ENCODE measurements at regions of chr4 and their contacts with region 1.

Region 1: DNA sequence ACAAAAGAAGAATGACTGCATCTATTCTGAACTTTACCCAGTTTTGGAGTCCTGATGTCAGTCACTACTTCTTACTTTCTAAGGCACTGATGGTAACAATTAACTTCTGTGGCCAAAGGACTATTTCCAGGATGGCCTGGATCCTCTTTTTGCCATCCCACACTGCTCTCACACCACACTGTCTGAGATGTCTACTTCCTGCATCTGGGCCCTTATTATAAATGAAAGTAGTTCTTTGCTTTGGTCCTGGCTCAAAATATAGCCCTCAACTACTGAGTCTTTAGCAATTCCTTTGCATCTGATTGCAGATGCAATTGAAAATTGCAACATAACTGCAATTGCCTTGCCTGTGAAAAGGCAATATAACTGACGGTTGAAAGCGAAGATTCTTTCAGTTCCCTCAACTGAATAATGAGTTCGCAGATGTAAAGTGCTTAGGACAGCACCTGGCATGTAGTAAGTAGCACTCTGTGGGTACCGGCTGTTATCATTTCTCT is 44.2 kb downstream of the COQ2 start:
- DNase-seq: peak; percentile 96
- ATAC-seq: peak; percentile 90
- H3K4me3 ChIP-seq: no peak overlapping the region
- H3K27ac ChIP-seq: peak overlapping the region; percentile 75; the same call in 1 of the 2 replicates
- H3K4me1 ChIP-seq: peaks cover 20% of the 10 kb centered on the region
- H3K27me3 ChIP-seq: no peaks in the 10 kb centered on the region
- CTCF ChIP-seq: no peak
- EP300 ChIP-seq: peak; percentile 76 to 89; a peak in 3 of 4 replicates
- POLR2A ChIP-seq: no peak
- RAD21 ChIP-seq: no peak

Region 2: DNA sequence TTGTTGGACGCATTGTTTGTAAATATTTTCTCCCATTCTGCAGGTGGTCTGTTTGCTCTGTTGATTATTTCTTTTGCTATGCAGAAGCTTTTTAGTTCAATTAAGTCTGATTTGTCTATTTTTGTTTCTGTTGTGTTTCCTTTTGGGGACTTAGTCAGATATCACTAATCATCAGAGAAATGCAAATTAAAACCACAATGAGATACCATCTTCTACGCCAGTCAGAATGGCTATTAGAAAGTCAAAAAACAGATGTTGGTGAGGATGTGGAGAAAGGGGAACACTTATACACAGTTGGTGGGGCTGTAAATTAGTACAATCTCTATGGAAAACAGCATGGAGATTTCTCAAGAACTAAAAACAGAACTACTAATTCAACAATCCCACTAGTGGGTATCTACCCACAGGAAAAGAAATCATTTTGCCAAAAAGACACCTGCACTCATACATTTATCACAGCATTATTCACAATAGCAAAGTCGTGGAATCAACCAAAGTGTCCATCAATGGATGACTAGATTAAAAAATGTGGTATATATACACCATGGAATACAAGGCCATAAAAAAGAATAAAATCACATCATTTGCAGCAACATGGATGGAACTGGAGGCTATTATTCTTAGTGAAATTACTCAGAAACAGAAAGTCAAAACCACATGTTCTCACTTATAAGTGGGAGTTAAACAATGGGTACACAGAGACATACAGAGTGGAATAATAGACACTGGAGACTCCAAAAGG is 36.0 kb after region 1 on chr4:
- CTCF ChIA-PET with region 1: interaction called, 7 read pairs
- POLR2A ChIA-PET with region 1: interaction called, 7 read pairs
- RAD21 ChIA-PET with region 1: interaction called, 5 read pairs
- SMC1A ChIA-PET with region 1: interaction called, 4 read pairs
- in situ Hi-C with region 1: no loop called
- intact Hi-C with region 1: loop called (anchors 1 kb)
- DNase-seq: no peak
- ATAC-seq: peak; percentile 70
- H3K4me3 ChIP-seq: peak overlapping the region; percentile 26; the same call in 1 of the 2 replicates
- H3K27ac ChIP-seq: peak overlapping the region; percentile 78
- H3K4me1 ChIP-seq: peaks cover 44% of the 10 kb centered on the region
- H3K27me3 ChIP-seq: no peaks in the 10 kb centered on the region
- CTCF ChIP-seq: no peak
- EP300 ChIP-seq: peak in 1 of 2 experiments; percentile 70; a peak in 1 of 4 replicates
- POLR2A ChIP-seq: no peak
- RAD21 ChIP-seq: no peak

Region 3: GRCh38 chr4:83527671-83528070 is 287.2 kb after region 1 on chr4:
- CTCF ChIA-PET with region 1: no interaction called
- POLR2A ChIA-PET with region 1: no interaction called
- RAD21 ChIA-PET with region 1: no interaction called
- SMC1A ChIA-PET with region 1: no interaction called
- in situ Hi-C with region 1: no loop called
- intact Hi-C with region 1: no loop called
- DNase-seq: no peak
- ATAC-seq: no peak
- H3K4me3 ChIP-seq: no peak overlapping the region
- H3K27ac ChIP-seq: no peak overlapping the region
- H3K4me1 ChIP-seq: no peaks in the 10 kb centered on the region
- H3K27me3 ChIP-seq: no peaks in the 10 kb centered on the region
- CTCF ChIP-seq: no peak
- EP300 ChIP-seq: no peak
- POLR2A ChIP-seq: no peak
- RAD21 ChIP-seq: no peak

Region 4: GRCh38 chr4:83932750-83933391 is 692.4 kb after region 1 on chr4:
- CTCF ChIA-PET with region 1: no interaction called
- POLR2A ChIA-PET with region 1: no interaction called
- RAD21 ChIA-PET with region 1: no interaction called
- SMC1A ChIA-PET with region 1: no interaction called
- in situ Hi-C with region 1: no loop called
- intact Hi-C with region 1: no loop called
- DNase-seq: no peak
- ATAC-seq: no peak
- H3K4me3 ChIP-seq: no peak overlapping the region
- H3K27ac ChIP-seq: no peak overlapping the region
- H3K4me1 ChIP-seq: no peaks in the 10 kb centered on the region
- H3K27me3 ChIP-seq: no peaks in the 10 kb centered on the region
- CTCF ChIP-seq: no peak
- EP300 ChIP-seq: no peak
- POLR2A ChIP-seq: no peak
- RAD21 ChIP-seq: no peak

Measured in GM12878 (cell line).